BJ (cell line): ENCODE measurements at regions of chr10 and their contacts with region 1.

Region 1: DNA sequence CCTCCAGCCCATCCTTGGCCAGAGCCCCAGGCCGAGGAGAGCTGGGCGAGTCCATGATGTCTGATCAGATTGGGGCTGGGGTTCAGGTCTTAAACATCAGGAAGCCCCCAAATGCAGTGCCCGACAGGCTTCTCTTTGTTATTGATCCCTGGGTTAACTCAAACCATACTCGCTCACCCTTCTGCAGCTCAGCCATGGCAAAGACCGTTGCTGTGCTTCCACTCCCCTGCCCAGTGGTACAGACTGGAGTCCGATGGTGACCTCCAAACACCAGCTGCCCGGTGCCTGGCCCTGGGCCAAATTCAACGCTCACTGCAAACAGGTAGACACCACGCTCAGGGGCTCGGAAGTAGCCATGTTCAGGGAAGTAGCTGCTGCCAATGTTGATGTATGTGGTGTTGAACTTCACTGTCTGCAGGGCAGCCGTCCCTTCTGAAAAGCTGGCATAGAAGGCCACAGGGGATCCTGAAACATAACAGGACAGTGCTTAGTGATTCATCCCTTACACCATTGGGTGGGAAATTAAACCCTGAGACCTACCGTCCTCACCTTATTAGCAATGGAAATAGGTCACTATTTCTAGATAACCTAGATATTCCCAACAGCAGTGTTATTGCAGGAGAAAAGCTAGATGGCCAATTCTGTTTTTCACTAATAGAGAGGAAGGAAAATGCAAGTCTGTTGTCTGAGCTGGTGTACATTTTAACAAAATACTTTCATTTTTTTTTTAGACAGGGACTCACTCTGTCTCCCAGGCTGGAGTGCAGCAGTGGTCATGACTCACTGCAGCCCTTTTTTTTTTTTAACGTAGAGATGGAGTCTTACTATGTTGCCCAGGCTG is 20.5 kb downstream of the MMRN2 start:
- DNase-seq: no peak
- H3K4me3 ChIP-seq: no peak overlapping the region
- H3K27me3 ChIP-seq: no peaks in the 10 kb centered on the region
- CTCF ChIP-seq: no peak

Region 2: GRCh38 chr10:86693721-86694369 is 243.0 kb before region 1 on chr10:
- CTCF ChIA-PET with region 1: interaction called, 11 read pairs
- POLR2A ChIA-PET with region 1: no interaction called
- DNase-seq: peak; percentile 29
- H3K4me3 ChIP-seq: no peak overlapping the region
- H3K27me3 ChIP-seq: peaks cover 1% of the 10 kb centered on the region; the same call in 1 of the 2 replicates
- CTCF ChIP-seq: peak; percentile 83

Region 3: GRCh38 chr10:86770417-86770960 is 166.4 kb before region 1 on chr10:
- CTCF ChIA-PET with region 1: no interaction called
- POLR2A ChIA-PET with region 1: interaction called, 10 read pairs
- DNase-seq: no peak
- H3K4me3 ChIP-seq: no peak overlapping the region
- H3K27me3 ChIP-seq: no peaks in the 10 kb centered on the region
- CTCF ChIP-seq: no peak

Region 4: GRCh38 chr10:86918022-86918471 is 18.8 kb before region 1 on chr10:
- CTCF ChIA-PET with region 1: interaction called, 11 read pairs
- POLR2A ChIA-PET with region 1: no interaction called
- DNase-seq: no peak
- H3K4me3 ChIP-seq: no peak overlapping the region
- H3K27me3 ChIP-seq: no peaks in the 10 kb centered on the region
- CTCF ChIP-seq: no peak

Region 5: DNA sequence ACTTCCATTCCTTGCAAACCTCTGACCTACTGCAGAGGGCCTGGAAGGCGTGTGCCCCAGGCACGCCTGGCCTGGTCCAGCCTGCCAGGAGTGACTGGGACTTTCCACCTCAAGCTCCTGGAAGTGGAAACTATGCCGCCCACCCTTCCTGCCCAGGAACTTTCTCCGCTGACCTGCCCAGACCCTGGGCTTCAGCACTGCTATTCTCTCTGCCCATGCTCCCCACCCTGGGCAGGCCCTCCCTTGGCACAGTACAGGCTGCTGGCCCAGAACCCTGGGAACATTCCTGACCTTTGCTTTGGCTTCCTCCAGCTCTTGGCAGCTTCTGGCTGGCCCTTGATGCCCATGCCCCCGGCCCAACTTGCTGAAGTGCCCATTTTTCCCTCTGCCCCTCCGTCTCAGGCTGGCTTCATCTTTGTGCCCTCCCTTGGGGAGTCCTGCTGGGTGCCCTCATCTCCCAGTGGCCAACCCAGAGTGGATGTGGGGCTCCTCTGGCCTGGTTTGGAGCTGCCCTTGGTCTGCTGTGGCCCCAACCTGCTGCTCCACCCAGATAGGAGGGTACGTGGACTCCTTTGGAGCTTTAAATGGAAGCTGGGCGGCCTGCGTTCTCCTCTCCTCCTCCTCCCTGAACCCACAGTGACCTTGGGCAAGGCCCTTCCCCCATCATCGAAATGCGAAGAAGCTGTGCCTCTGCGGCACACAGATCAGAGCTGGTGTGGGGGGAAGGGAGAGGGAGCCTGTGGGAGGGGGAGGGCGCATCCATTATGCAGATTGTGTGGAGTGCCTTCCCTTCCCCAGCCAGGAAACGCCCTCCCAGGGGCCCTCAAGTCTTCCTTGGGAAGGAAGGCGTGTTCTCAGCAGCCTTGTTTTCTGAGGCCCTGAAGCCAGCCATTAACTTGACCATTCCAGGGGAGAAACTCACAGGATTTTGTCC is 17.1 kb after region 1 on chr10:
- CTCF ChIA-PET with region 1: interaction called, 346 read pairs
- POLR2A ChIA-PET with region 1: no interaction called
- DNase-seq: no peak
- H3K4me3 ChIP-seq: no peak overlapping the region
- H3K27me3 ChIP-seq: no peaks in the 10 kb centered on the region
- CTCF ChIP-seq: no peak